ENCODE measurements at regions of chr19 and their contacts with region 1.

Region 1: GRCh38 chr19:12890787-12891552 is at the start of gene GCDH:
- DNase-seq: peak; percentile 96 to 99 (median 98)
- ATAC-seq: peak; percentile 97 to 99 (median 99)
- H3K4me3 ChIP-seq: peak within 1 kb of the TSS; percentile 71 to 98 (median 86)
- H3K27ac ChIP-seq: peak within 1 kb of the TSS in 10 of 12 donors; percentile 57 to 85 (median 74)
- H3K4me1 ChIP-seq: peaks cover 0 to 23% (median 12%) of the 10 kb centered on the region in 12 donors
- H3K27me3 ChIP-seq: peaks cover 0 to 11% (median 4%) of the 10 kb centered on the region in 9 donors
- CTCF ChIP-seq: peak in 1 of 12 donors; percentile 19
- POLR2A ChIP-seq: peak; percentile 49 to 65
- total RNA-seq, gene GCDH: 29.8 to 105 (median 46.7) TPM

Region 2: GRCh38 chr19:12859546-12859945 is 31.4 kb before region 1 on chr19:
- intact Hi-C with region 1: no loop called
- DNase-seq: no peak
- ATAC-seq: no peak
- H3K4me3 ChIP-seq: no peak overlapping the region
- H3K27ac ChIP-seq: no peak overlapping the region
- H3K4me1 ChIP-seq: no peaks in the 10 kb centered on the region
- H3K27me3 ChIP-seq: peaks cover 0 to 2% (median 0%) of the 10 kb centered on the region in 9 donors
- CTCF ChIP-seq: no peak
- POLR2A ChIP-seq: no peak

Region 3: GRCh38 chr19:12918271-12918670 is 27.3 kb after region 1 on chr19:
- intact Hi-C with region 1: no loop called
- DNase-seq: no peak
- ATAC-seq: peak in 1 of 4 donors; percentile 5
- H3K4me3 ChIP-seq: no peak overlapping the region
- H3K27ac ChIP-seq: no peak overlapping the region
- H3K4me1 ChIP-seq: peaks cover 0 to 18% (median 11%) of the 10 kb centered on the region in 12 donors
- H3K27me3 ChIP-seq: no peaks in the 10 kb centered on the region
- CTCF ChIP-seq: no peak
- POLR2A ChIP-seq: no peak

Region 4: GRCh38 chr19:12938234-12939025 is 47.5 kb after region 1 on chr19 and contains the start of gene CALR:
- intact Hi-C with region 1: loop called in 2 of 10 experiments (anchors 2 to 10 kb)
- DNase-seq: peak; percentile 99 to 100 (median 100)
- ATAC-seq: peak; percentile 92 to 95 (median 95)
- H3K4me3 ChIP-seq: peak within 1 kb of the TSS; percentile 63 to 99 (median 95)
- H3K27ac ChIP-seq: peak within 1 kb of the TSS; percentile 75 to 96 (median 92)
- H3K4me1 ChIP-seq: peaks cover 6 to 61% (median 35%) of the 10 kb centered on the region in 12 donors
- H3K27me3 ChIP-seq: no peaks in the 10 kb centered on the region
- CTCF ChIP-seq: peak in 3 of 12 donors; percentile 16 to 24 (median 24)
- POLR2A ChIP-seq: peak; percentile 100
- total RNA-seq, gene CALR: 231 to 816 (median 380) TPM

Region 5: GRCh38 chr19:12956446-12957388 is 65.7 kb after region 1 on chr19 and contains the start of gene GADD45GIP1:
- intact Hi-C with region 1: loop called in 6 of 10 experiments (anchors 5 to 10 kb)
- DNase-seq: peak; percentile 73 to 92 (median 82)
- ATAC-seq: peak; percentile 79 to 94 (median 90)
- H3K4me3 ChIP-seq: peak within 1 kb of the TSS; percentile 72 to 97 (median 90)
- H3K27ac ChIP-seq: peak within 1 kb of the TSS; percentile 83 to 95 (median 92)
- H3K4me1 ChIP-seq: peaks cover 0 to 54% (median 40%) of the 10 kb centered on the region in 12 donors
- H3K27me3 ChIP-seq: no peaks in the 10 kb centered on the region
- CTCF ChIP-seq: no peak
- POLR2A ChIP-seq: peak in 1 of 2 donors; percentile 35
- total RNA-seq, gene GADD45GIP1: 17.2 to 63.6 (median 27.2) TPM